HEK293 (cell line): ENCODE measurements at regions of chrX and their contacts with region 1.

Region 1: GRCh38 chrX:106802387-106803275 is at the start of gene TBC1D8B:
- H3K4me3 ChIP-seq: peak within 1 kb of the TSS; percentile 53
- H3K27ac ChIP-seq: peak within 1 kb of the TSS; percentile 37; the same call in 1 of the 2 replicates
- H3K4me1 ChIP-seq: peaks cover 6% of the 10 kb centered on the region
- CTCF ChIP-seq: no peak

Region 2: GRCh38 chrX:106752086-106752678 is 50.4 kb before region 1 on chrX:
- CTCF ChIA-PET with region 1: no interaction called
- POLR2A ChIA-PET with region 1: interaction called, 10 read pairs
- H3K4me3 ChIP-seq: no peak overlapping the region
- H3K27ac ChIP-seq: no peak overlapping the region
- H3K4me1 ChIP-seq: no peaks in the 10 kb centered on the region
- CTCF ChIP-seq: no peak

Region 3: DNA sequence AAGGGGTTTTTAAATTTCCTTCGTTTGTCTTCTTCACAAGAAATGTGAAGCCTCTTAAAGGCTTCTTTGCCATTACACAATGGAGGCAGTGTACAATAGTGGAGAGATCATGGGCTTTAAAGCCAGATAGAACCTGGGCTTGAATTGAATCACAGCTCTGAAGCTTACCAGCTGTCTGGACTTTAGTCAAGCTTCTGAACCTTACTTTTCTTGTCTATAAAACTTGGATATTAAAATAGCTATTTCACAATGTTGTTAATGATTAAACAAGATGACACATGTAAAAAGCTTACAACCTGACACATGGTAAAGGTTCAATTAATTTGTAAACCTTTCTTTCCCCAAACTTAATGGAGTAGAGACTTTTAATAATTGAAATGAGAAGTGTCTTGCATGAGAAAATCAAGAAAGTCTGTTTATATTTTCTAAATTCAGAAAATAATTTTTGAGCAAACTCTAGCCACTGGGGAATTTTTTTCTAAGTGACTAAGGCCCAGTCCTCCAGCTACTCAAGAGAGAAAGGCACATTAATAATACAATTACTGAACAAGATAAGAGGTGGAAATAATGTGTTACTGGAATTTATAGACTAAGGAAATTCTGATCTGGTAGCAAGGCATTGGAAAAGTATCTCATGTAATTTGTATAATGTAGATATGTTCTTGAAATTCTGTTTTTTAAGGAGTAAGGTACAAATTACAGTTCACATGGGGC is 21.8 kb before region 1 on chrX:
- CTCF ChIA-PET with region 1: no interaction called
- POLR2A ChIA-PET with region 1: no interaction called
- H3K4me3 ChIP-seq: no peak overlapping the region
- H3K27ac ChIP-seq: no peak overlapping the region
- H3K4me1 ChIP-seq: peaks cover 4% of the 10 kb centered on the region; the same call in 1 of the 2 replicates
- CTCF ChIP-seq: no peak